Endothelial cell of umbilical vein (primary cell): ENCODE measurements at regions of chrX and their contacts with region 1.

Region 1: GRCh38 chrX:74550295-74550802 is 64.1 kb downstream of the RLIM start:
- DNase-seq: peak; percentile 77
- H3K4me3 ChIP-seq: no peak overlapping the region
- H3K27ac ChIP-seq: no peak overlapping the region
- H3K4me1 ChIP-seq: no peaks in the 10 kb centered on the region
- H3K27me3 ChIP-seq: no peaks in the 10 kb centered on the region
- CTCF ChIP-seq: peak; percentile 80 to 94
- POLR2A ChIP-seq: no peak

Region 2: DNA sequence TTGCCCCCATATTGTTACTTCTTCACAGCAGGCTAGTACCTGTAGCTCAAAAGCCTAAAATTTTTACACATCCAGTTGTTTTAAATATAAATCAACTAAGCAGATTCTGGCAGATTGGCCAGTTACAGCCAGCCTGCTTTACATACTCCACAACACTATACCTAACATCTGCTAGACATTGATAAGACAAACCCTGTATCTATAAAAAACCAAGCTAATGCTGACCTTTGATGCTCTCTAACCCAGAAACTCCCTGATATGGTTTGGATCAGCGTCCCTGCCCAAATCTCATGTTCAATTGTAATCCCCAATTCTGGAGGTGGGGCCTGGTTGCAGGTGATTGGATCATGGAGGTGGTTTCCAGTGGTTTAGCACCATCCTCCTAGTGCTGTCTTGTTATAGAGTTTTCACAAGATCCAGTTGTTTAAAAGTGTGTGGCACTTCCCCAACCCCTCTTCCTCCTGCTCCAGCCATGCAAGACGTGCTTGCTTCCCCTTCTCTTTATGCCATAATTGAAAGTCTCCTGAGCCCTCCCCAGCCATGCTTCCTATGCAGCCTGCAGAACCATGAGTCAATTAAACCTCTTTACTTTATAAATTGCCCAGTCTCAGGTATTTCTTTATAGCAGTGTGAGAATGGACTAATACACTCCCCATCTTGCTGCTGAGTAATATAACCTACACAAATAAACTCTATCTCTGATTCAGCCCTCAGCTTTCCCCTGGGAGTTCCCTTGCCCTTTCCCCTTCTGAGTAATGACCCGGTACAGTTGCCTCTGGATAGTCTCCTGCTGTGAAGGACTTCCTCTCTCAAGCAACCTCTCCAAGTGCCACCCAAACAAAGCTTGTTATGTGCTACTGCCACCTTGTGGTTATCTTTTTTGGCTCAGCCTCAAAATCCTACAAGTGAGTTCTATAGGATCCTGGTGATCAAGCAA is 206.7 kb before region 1 on chrX:
- CTCF ChIA-PET with region 1: no interaction called
- POLR2A ChIA-PET with region 1: no interaction called
- dilution Hi-C with region 1: no loop called
- intact Hi-C with region 1: loop called (anchors 1 kb)
- DNase-seq: peak; percentile 90
- H3K4me3 ChIP-seq: no peak overlapping the region
- H3K27ac ChIP-seq: no peak overlapping the region
- H3K4me1 ChIP-seq: no peaks in the 10 kb centered on the region
- H3K27me3 ChIP-seq: no peaks in the 10 kb centered on the region
- CTCF ChIP-seq: peak; percentile 24 to 35
- POLR2A ChIP-seq: no peak

Region 3: DNA sequence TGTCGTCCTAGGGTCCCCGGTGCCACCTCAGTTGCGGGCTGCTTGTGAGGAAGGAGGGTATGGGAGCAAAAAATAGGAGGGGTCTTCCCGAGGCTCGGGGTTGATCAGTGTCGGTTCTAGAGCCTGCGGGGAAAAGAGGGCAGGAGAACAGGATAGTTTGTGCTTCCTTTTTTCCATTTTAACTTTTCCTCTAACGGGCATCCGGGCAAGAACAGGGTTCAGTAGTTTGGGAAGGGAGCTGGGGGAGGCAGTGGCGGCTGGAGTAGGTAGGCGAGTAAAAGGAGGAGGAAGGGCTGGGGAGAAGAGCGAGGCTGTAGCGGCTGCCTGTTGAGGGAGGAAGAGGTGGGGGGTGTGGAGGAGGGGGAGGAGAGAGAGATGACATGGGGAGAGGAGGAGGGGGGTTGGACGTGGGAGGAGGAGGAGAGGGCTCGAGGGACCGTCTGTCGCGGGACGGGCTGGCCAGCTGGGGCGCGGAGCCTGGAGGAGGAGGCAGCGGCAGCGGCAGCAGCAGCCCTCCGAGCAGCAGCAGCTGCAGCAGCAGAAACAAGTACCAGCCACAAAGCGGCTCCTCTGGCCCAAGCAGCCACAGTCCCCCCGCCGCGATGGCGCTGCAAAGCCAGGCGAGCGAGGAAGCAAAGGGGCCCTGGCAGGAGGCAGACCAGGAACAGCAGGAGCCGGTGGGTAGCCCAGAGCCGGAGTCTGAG is 129.2 kb before region 1 on chrX and contains the start of gene SLC16A2:
- CTCF ChIA-PET with region 1: no interaction called
- POLR2A ChIA-PET with region 1: no interaction called
- dilution Hi-C with region 1: no loop called
- intact Hi-C with region 1: loop called (anchors 1 kb)
- DNase-seq: peak; percentile 48
- H3K4me3 ChIP-seq: peak within 1 kb of the TSS; percentile 29 to 44 (median 43)
- H3K27ac ChIP-seq: no peak within 1 kb of the TSS
- H3K4me1 ChIP-seq: no peaks in the 10 kb centered on the region
- H3K27me3 ChIP-seq: no peaks in the 10 kb centered on the region
- CTCF ChIP-seq: no peak
- POLR2A ChIP-seq: no peak
- total RNA-seq, gene SLC16A2: 3.1 and 3.3 TPM in 2 replicates

Region 4: DNA sequence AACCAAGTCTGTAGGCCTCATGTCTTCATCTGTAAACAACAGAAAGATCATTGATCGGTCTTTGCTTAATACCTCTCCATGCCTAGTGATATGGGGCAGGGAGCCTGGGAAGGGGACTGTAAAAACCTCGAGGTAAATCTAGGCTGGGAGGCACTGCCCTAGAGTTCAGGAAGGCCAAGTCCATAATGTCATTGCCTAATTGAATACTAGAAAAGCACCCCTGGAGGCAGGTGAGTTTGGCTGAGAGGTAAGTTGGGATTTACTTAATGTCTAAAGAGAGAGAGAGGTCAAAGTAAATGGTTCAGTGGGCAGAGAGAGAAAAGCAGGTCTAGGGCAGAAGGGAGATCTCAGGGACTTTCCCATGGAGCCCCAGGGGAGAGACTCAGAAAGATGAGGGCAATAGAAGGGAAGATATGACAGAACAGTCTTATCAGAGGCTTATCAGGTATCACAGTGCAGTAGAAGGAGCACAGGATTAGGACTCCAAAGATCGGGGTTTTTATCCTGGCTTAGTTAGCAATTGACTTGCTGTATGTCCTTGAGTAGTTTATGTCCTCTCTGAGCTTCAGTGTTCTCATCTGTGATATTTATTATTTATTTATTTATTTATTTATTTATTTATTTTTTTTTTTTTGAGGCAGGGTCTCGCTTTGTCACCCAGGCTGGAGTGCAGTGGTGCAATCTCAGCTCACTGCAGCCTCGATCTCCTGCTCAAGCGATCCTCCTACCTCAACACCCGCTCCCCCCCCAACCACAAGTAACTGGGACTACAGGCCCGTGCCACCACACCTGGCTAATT is 43.8 kb before region 1 on chrX:
- CTCF ChIA-PET with region 1: no interaction called
- POLR2A ChIA-PET with region 1: no interaction called
- dilution Hi-C with region 1: no loop called
- intact Hi-C with region 1: no loop called
- DNase-seq: no peak
- H3K4me3 ChIP-seq: no peak overlapping the region
- H3K27ac ChIP-seq: no peak overlapping the region
- H3K4me1 ChIP-seq: no peaks in the 10 kb centered on the region
- H3K27me3 ChIP-seq: no peaks in the 10 kb centered on the region
- CTCF ChIP-seq: no peak
- POLR2A ChIP-seq: no peak

Region 5: GRCh38 chrX:74536152-74536831 is 14.1 kb before region 1 on chrX:
- CTCF ChIA-PET with region 1: interaction called, 3 read pairs
- POLR2A ChIA-PET with region 1: no interaction called
- dilution Hi-C with region 1: no loop called
- intact Hi-C with region 1: loop called (anchors 1 kb)
- DNase-seq: peak; percentile 72
- H3K4me3 ChIP-seq: peak overlapping the region; percentile 32 to 46 (median 35)
- H3K27ac ChIP-seq: peak overlapping the region; percentile 68
- H3K4me1 ChIP-seq: peaks cover 9% of the 10 kb centered on the region
- H3K27me3 ChIP-seq: no peaks in the 10 kb centered on the region
- CTCF ChIP-seq: peak; percentile 23 to 50
- POLR2A ChIP-seq: no peak

Region 6: DNA sequence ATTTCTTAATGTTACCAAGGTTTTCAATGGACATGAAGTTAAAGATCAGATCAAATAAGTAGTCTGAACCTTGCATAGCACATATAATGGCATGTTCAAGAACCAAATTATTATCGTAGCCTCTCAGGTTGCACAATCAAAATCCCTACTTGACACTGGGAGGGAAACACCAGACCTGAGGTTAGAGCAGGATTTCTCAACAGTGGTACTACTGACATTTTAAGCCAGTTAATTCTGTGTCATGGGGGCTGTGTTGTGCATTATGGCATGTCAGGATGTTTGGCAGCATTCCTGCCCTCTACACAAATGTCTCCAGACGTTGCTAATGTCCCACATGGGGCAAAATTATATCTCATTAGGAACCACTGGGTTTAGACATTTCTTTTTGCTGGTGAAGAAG is 43.2 kb after region 1 on chrX:
- CTCF ChIA-PET with region 1: no interaction called
- POLR2A ChIA-PET with region 1: no interaction called
- dilution Hi-C with region 1: no loop called
- intact Hi-C with region 1: no loop called
- DNase-seq: no peak
- H3K4me3 ChIP-seq: no peak overlapping the region
- H3K27ac ChIP-seq: no peak overlapping the region
- H3K4me1 ChIP-seq: no peaks in the 10 kb centered on the region
- H3K27me3 ChIP-seq: no peaks in the 10 kb centered on the region
- CTCF ChIP-seq: no peak
- POLR2A ChIP-seq: no peak